GM10248 (cell line): ENCODE measurements at regions of chr1 and their contacts with region 1.

Region 1: GRCh38 chr1:211356723-211357407 is 30.2 kb downstream of the TRAF5 start:
- DNase-seq: no peak
- CTCF ChIP-seq: no peak

Region 2: DNA sequence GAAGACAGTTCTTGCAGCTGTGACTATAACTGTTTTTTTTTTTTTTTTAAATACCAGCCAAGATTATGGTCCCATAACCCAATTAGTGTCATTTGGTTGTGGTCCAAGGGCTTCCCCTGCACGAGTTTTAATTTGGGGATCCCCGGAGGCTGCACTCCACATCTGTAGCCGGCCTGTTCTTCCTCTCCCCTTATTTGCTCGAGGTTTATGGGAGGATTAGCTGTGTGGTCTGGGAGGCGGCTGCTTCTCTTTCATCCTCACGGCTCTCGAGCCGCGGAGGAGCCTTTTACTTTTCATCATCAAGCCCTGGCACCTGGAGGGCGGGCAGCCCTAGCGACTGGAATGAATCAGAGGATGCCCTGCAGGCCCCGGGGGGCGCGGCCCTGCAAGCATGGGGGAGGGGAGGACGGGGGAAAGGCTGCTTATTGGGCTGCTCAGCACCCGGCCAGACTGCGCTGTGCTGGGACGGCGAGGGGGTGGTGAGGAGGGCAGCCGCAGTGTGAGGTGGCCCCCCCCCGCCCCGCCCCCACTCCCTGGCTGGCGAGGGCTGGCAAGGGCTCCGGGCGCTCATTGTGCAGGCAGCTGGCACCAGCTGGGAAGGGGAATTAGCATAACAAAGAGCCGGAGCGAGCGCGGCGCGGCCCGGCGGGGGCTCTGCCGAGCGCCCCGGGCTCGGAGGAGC is 1105.7 kb before region 1 on chr1:
- CTCF ChIA-PET with region 1: no interaction called
- POLR2A ChIA-PET with region 1: no interaction called
- DNase-seq: no peak
- CTCF ChIP-seq: no peak

Region 3: GRCh38 chr1:211371406-211372105 is 14.7 kb after region 1 on chr1:
- CTCF ChIA-PET with region 1: interaction called, 10 read pairs
- POLR2A ChIA-PET with region 1: no interaction called
- DNase-seq: no peak
- CTCF ChIP-seq: no peak

Region 4: GRCh38 chr1:211384524-211384923 is 27.7 kb after region 1 on chr1:
- CTCF ChIA-PET with region 1: no interaction called
- POLR2A ChIA-PET with region 1: no interaction called
- DNase-seq: no peak
- CTCF ChIP-seq: no peak